CD4-positive, alpha-beta T cell (primary cell): ENCODE measurements at regions of chr11 and their contacts with region 1.

Region 1: GRCh38 chr11:124746621-124747243 is 5.3 kb downstream of the VSIG2 start:
- DNase-seq: peak; percentile 71 to 90 (median 76)
- ATAC-seq: peak; percentile 90
- H3K4me3 ChIP-seq: peak overlapping the region; percentile 95
- H3K4me3 Mint-ChIP-seq: peak overlapping the region; percentile 94
- H3K27ac ChIP-seq: peak overlapping the region; percentile 72 to 75
- H3K27ac Mint-ChIP-seq: peak overlapping the region; percentile 82
- H3K4me1 ChIP-seq: peaks cover 32% of the 10 kb centered on the region
- H3K4me1 Mint-ChIP-seq: peaks cover 5% of the 10 kb centered on the region
- H3K27me3 ChIP-seq: peaks cover 0 to 1% of the 10 kb centered on the region in 2 experiments
- H3K27me3 Mint-ChIP-seq: no peaks in the 10 kb centered on the region
- CTCF ChIP-seq: peak; percentile 67

Region 2: DNA sequence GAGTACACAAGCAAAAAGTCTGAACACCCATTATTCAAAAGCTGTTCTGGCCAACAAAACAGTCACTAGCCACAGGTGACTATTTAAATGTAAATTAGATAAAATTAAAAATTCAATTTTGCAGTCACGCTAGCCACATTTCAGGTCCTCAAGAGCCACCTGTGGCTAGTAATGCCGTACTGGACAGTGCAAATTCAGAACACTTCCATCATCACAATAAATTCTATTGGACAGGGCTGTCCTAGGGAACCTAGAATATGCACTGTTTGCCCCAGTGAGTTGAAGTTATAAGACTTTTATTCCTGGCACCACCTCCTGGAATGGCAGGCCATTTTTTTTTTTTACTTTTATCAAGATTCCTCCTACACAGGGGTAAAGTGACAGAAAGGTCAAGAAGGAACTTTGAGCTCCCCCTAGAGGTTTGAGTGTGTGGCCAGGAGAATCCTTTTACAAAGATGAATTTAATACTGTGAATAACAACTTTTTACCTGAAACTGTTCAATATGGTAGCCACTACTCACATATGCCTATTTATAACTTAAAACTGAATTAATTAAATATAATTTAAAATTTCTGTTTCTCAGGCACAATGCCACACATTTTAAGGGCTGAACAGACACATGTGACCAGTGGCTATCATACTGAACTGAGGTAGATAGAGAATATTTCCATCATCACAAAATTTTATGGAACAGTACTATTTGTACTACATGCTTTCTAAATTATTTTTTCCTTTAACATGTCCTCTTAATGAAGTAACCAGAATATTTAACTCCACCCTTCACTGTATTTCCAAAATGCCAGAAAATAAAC is 46.9 kb after region 1 on chr11:
- CTCF ChIA-PET with region 1: interaction called, 27 read pairs
- POLR2A ChIA-PET with region 1: interaction called, 32 read pairs
- intact Hi-C with region 1: no loop called
- DNase-seq: peak in 4 of 14 experiments; percentile 35 to 71 (median 62)
- ATAC-seq: no peak
- H3K4me3 ChIP-seq: no peak overlapping the region
- H3K4me3 Mint-ChIP-seq: no peak overlapping the region
- H3K27ac ChIP-seq: no peak overlapping the region
- H3K27ac Mint-ChIP-seq: no peak overlapping the region
- H3K4me1 ChIP-seq: peaks cover 3% of the 10 kb centered on the region
- H3K4me1 Mint-ChIP-seq: peaks cover 46% of the 10 kb centered on the region
- H3K27me3 ChIP-seq: no peaks in the 10 kb centered on the region
- H3K27me3 Mint-ChIP-seq: no peaks in the 10 kb centered on the region
- CTCF ChIP-seq: peak; percentile 84

Region 3: DNA sequence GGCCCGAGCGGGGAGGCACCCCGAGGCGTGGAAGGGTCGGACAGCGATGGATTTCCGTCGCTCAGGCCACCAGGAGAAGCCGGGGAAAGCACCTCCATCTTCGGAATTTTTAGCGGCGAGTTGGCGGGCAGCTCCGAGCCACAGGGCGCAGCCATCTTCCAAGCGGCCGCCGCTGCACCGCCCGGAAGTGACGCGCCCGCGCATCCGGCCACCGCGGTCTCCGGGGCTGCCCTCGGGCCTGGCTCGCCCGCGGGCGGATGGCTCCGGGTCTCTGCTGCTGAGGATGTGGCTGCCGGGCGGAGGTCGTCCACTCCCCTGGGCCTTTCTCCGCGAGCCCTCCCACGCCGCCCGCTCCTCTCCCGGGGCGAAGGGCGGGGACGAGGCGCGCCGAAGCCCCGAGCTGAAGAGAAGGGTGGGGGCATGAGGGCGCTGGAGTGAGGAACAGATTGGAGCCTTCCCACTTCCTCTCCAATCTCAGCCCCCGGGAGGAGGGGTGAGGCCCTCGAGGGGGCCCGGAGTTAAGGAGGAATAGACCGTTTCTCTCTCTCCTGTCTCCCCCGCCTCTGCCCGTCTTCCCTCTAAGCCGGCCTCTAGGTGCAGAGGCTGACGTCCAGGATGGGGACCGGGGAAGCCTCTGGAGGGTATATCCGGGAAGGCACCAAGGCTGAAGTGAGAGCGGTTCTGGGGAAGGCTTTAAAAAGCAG is 53.6 kb after region 1 on chr11 and contains the start of gene MSANTD2:
- CTCF ChIA-PET with region 1: interaction called, 27 read pairs
- POLR2A ChIA-PET with region 1: interaction called, 32 read pairs
- intact Hi-C with region 1: loop called (anchors 5 kb)
- DNase-seq: peak; percentile 53 to 89 (median 71)
- ATAC-seq: peak; percentile 79
- H3K4me3 ChIP-seq: peak within 1 kb of the TSS; percentile 85
- H3K4me3 Mint-ChIP-seq: peak within 1 kb of the TSS; percentile 98
- H3K27ac ChIP-seq: peak within 1 kb of the TSS; percentile 94 to 96
- H3K27ac Mint-ChIP-seq: peak within 1 kb of the TSS; percentile 95
- H3K4me1 ChIP-seq: peaks cover 20% of the 10 kb centered on the region
- H3K4me1 Mint-ChIP-seq: peaks cover 25% of the 10 kb centered on the region
- H3K27me3 ChIP-seq: no peaks in the 10 kb centered on the region
- H3K27me3 Mint-ChIP-seq: no peaks in the 10 kb centered on the region
- CTCF ChIP-seq: no peak
- total RNA-seq, gene MSANTD2: 4.2 to 5.1 TPM

Region 4: GRCh38 chr11:125429166-125429707 is 682.5 kb after region 1 on chr11:
- CTCF ChIA-PET with region 1: no interaction called
- POLR2A ChIA-PET with region 1: no interaction called
- intact Hi-C with region 1: no loop called
- DNase-seq: peak in 12 of 14 experiments; percentile 7 to 57 (median 20)
- ATAC-seq: no peak
- H3K4me3 ChIP-seq: no peak overlapping the region
- H3K4me3 Mint-ChIP-seq: no peak overlapping the region
- H3K27ac ChIP-seq: no peak overlapping the region
- H3K27ac Mint-ChIP-seq: no peak overlapping the region
- H3K4me1 ChIP-seq: peaks cover 4% of the 10 kb centered on the region
- H3K4me1 Mint-ChIP-seq: no peaks in the 10 kb centered on the region
- H3K27me3 ChIP-seq: peaks cover 0 to 17% of the 10 kb centered on the region in 2 experiments
- H3K27me3 Mint-ChIP-seq: peaks cover 39% of the 10 kb centered on the region
- CTCF ChIP-seq: peak; percentile 18